ENCODE measurements at regions of chr12 and their contacts with region 1.

Region 1: DNA sequence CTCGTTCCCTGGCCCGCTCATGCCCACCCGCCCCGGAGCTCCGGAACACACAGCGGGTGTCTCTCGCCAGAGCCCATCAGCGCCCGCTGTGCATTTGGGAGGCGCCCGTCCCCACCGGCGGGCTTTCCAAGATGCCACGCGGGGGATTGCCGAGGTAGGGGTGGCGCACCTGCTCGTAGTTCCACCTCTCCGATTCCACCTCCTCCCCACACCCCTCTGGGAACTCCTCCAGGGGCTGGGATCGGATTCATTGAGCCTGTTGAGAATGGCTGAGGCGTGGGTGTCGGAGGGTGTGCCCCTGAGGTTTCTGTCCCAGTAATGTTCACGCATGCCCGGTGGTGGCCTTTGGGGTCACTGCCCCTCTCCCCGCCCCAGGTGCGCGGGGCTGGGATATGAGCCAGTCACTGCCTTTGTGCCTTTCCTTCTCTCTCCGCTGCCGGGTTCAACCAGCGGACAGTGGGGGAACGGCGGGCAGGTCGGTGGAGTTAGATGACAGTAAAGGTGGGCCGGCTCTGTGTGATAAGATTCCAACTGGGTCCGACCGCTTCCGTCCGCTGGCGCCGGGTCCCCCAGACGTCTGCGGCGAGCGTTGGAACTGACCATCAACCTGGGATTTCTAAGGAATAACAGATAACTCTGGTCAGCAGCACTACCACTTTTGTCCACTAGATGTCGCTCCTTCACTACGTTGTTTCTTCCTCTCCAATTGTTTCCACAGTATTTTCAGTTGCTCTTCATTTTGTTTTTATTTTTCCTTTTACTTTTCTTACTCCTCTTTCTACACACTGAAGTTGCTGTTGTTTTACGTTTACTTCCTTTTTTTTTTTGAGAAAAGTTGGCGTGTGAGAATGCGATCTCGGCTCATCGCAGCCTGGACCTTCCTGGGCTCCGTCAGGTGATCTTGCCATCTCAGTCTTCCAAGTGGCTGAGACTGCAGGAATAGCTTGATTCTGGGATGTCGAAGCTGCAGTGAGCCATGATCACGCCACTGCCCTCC is 178.1 kb upstream of the ALG10B start:
- DNase-seq: peak; percentile 57
- CTCF ChIP-seq: peak; percentile 91

Region 2: DNA sequence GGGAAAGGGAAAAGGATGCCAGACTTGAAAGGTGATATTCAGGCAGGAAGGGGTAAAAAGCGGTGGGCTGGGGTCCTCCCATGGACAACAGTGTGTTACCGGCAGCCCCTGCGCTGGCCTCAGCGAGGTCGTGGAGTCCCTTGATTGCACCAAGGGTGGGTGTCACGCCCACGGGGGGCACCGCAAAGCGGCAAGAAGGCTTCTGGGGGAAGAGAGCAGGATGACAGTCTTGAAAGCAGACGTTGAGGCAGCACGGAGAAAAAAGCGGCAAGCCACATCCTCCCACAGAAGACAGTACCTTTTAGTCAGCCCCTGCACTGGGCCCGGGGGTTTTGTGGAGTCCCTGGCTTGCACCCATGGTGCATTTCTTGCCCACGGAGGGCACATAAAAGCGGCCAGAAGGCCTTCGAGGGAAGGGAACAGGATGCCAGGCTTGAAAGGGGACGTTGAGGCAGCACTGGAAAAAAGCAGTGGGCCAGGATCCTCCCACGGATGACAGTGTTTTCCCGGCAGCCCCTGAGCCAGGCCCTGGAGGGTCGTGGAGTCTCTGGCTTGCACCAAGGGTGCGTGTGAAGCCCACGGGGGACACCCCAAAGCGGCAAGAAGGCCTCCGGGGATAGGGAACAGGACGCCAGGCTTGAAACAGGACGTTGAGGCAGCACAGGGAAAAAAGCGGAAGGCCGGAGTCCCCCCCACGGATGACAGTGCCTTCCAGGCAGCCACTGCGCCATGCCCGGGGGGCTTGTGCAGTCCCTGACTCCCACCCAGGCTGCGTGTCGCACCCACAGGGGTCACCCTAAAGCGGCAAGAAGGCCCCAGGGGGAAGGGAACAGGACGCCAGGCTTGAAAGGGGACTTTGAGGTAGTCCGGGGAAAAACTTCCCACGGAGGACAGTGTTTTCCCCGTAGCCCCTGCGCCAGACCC is 15.8 kb after region 1 on chr12:
- CTCF ChIA-PET with region 1: no interaction called
- POLR2A ChIA-PET with region 1: no interaction called
- DNase-seq: no peak
- CTCF ChIP-seq: no peak

Region 3: DNA sequence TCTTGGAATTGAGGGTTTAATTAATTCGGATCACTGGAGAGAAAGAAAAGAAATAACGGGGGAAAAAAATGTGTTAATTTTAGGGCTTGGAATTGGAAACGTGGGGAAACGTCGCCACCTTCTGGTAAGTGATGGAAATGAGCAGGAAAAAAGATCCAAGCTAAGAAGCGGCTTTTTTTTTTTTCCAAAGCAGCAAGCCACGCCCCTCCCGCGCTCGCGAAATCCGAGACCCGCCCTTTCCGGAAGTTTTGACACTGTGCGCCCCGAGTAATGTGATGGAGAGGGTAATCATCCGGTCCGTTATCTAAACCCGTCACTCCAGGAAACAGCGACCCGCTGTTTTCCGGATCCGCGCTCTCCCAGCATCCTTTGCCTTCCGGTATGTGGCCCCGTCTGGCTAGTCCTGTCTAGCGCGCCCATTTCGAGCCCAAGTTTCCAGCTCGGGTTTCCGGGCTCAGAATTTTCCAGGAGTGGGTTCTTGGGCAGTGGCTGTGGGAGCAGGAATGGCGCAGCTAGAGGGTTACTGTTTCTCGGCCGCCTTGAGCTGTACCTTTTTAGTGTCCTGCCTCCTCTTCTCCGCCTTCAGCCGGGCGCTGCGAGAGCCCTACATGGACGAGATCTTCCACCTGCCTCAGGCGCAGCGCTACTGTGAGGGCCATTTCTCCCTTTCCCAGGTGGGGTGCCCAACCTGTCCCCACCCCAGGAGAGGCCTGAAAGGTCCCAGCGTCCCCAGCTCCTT is 178.0 kb after region 1 on chr12 and contains the start of gene ALG10B:
- CTCF ChIA-PET with region 1: interaction called, 16 read pairs
- POLR2A ChIA-PET with region 1: no interaction called
- DNase-seq: peak; percentile 83
- CTCF ChIP-seq: peak; percentile 48

Region 4: GRCh38 chr12:38465020-38465419 is 326.5 kb after region 1 on chr12:
- CTCF ChIA-PET with region 1: no interaction called
- POLR2A ChIA-PET with region 1: no interaction called
- DNase-seq: no peak
- CTCF ChIP-seq: no peak

Measured in GM10248 (cell line).